AG04450 (cell line): ENCODE measurements at regions of chr10 and their contacts with region 1.

Region 1: DNA sequence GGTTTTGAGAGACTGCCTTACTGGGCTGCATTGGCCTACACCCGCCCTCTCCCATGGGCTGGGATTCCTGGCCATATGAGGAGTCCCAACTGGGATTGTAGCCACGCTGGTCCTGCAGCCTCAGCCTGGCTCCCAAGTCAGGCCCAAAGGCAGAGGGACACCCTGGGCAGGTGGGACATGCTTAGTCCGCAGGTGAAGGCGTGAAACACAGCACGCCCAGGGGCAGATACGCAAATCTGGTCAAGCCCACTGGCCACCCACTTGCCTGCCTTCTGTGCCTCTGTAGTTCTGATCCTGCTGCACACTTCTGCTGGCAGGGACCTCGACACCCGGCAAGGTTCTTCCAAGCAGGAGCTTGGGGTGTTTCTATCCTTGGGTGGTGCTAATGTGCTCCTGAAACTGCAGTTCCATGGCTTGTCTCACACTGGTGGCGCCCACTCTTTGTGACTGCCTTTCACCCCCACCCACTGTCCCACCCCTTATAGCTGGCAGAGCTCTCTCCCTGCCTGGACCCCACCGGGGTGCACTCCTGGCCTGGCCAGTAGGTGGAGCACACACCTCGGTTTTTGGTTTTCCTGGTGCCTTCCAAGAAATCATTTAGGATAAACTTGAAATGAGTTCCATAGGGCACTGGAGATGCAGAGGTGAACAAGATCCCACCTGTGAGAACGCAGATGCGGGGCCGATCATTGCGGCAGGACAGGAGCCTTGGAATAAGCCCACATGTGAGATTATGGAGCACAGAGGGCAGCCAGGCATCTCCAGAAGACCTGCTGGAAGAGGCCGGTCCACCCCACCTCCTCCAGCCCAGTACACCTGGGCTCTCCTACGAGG is 47.9 kb downstream of the MKI67 start:
- DNase-seq: peak; percentile 7
- H3K4me3 ChIP-seq: no peak overlapping the region
- H3K27ac ChIP-seq: no peak overlapping the region
- H3K27me3 ChIP-seq: peaks cover 19% of the 10 kb centered on the region
- CTCF ChIP-seq: peak; percentile 84

Region 2: DNA sequence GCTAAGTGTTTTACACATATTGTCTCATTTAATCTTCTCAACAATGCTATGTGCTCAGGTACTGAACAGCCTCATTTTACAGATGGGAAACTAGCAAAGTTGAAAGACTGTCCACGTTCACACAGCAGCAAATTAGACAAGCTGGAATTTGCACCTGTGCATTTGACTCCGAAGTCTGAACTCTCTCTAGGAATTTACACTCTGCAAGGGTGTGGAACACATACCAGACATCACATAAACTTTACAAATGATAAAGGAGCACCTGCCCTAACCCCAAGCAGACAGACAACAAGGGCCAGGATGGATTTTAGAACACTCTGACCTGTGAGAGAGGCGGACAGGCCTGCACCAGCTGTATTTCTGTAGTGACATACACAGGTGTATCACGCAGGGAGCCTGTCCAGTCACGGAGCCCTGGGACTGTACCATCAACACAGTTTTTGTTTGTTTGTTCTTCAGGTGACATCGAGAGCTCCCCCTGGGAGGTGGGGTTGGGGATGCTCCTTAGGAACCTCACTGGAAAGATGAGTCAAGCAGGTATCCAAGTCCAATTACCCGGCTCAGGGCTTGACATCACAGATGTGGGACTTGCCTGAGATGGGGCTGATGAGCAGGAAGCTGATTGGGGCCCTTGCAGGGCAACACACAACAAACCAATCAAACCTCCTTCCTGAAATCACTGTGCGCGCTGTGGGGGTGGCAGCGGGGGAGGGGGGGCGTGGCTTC is 16.8 kb after region 1 on chr10:
- CTCF ChIA-PET with region 1: no interaction called
- POLR2A ChIA-PET with region 1: no interaction called
- DNase-seq: no peak
- H3K4me3 ChIP-seq: no peak overlapping the region
- H3K27ac ChIP-seq: no peak overlapping the region
- H3K27me3 ChIP-seq: no peaks in the 10 kb centered on the region
- CTCF ChIP-seq: no peak

Region 3: DNA sequence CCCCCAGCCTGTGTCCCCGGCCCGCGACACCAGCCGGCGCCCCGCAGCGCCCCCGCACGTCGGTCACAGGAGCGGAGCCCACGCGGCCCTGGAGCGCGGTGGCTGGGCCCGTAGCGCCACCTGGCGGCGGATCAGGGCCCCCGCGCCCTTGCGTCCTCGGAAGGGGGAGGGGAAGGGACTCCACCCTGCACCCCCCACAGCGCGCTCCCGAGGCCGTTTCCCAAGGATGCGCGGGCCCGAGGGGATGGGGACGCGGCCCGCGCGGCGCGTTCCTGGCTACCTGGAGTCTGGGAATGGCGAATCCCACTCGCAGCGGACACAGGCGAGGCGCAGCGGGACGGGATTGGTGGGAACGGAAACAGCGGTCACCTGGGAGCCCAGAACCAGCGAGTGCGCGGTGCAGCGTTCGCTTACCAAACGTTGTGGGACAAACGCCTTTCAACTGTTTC is 71.7 kb after region 1 on chr10:
- CTCF ChIA-PET with region 1: interaction called, 17 read pairs
- POLR2A ChIA-PET with region 1: no interaction called
- DNase-seq: peak; percentile 11
- H3K4me3 ChIP-seq: peak overlapping the region; percentile 71
- H3K27ac ChIP-seq: no peak overlapping the region
- H3K27me3 ChIP-seq: peaks cover 16% of the 10 kb centered on the region
- CTCF ChIP-seq: peak; percentile 77

Region 4: GRCh38 chr10:128211953-128212727 is 133.8 kb after region 1 on chr10:
- CTCF ChIA-PET with region 1: interaction called, 12 read pairs
- POLR2A ChIA-PET with region 1: no interaction called
- DNase-seq: peak; percentile 2
- H3K4me3 ChIP-seq: 0 out of 2 replicates have a peak overlapping the region, but pooled peaks have one; percentile 10
- H3K27ac ChIP-seq: no peak overlapping the region
- H3K27me3 ChIP-seq: no peaks in the 10 kb centered on the region
- CTCF ChIP-seq: peak; percentile 73